HCT116 (cell line): ENCODE measurements at regions of chr15 and their contacts with region 1.

Region 1: DNA sequence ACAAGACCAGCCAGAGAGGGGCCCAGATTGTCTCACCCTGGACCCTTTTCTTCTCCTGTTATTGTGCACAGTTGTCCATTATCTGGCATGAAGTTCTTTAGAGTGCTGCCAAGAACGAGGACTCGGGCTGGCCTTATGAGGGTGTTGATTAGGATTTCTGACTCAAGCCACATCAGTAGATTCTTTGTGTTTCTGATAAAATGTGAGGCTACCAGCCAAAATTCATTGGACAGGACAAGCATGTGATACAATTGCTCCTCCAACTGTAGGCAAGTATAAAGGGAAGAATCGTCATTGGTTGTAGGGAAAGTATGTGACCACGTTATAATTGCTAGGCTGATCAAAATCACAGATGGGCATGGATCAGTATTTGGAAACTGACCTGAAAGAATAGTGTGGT is 99.2 kb upstream of the TMC3 start:
- DNase-seq: no peak
- ATAC-seq: no peak
- H3K4me3 ChIP-seq: no peak overlapping the region
- H3K27ac ChIP-seq: no peak overlapping the region
- H3K4me1 ChIP-seq: no peaks in the 10 kb centered on the region
- H3K27me3 ChIP-seq: peaks cover 30% of the 10 kb centered on the region; the same call in 1 of the 2 replicates
- CTCF ChIP-seq: no peak
- POLR2A ChIP-seq: no peak
- RAD21 ChIP-seq: no peak

Region 2: GRCh38 chr15:81752546-81752942 is 279.4 kb after region 1 on chr15:
- CTCF ChIA-PET with region 1: no interaction called
- POLR2A ChIA-PET with region 1: no interaction called
- RAD21 ChIA-PET with region 1: no interaction called
- intact Hi-C with region 1: loop called (anchors 10 kb)
- DNase-seq: no peak
- ATAC-seq: no peak
- H3K4me3 ChIP-seq: no peak overlapping the region
- H3K27ac ChIP-seq: no peak overlapping the region
- H3K4me1 ChIP-seq: no peaks in the 10 kb centered on the region
- H3K27me3 ChIP-seq: peaks cover 59% of the 10 kb centered on the region
- CTCF ChIP-seq: no peak
- POLR2A ChIP-seq: no peak
- RAD21 ChIP-seq: no peak